Sigmoid colon (tissue), 7 donors: ENCODE measurements at regions of chr13 and their contacts with region 1.

Region 1: GRCh38 chr13:41456768-41457588 is at the start of gene RGCC:
- DNase-seq: peak; percentile 82
- H3K4me3 ChIP-seq: peak within 1 kb of the TSS; percentile 52 to 72 (median 62)
- H3K27ac ChIP-seq: peak within 1 kb of the TSS; percentile 41 to 73 (median 58)
- H3K4me1 ChIP-seq: peaks cover 0 to 24% (median 22%) of the 10 kb centered on the region in 4 donors
- H3K27me3 ChIP-seq: peaks cover 9 to 57% (median 19%) of the 10 kb centered on the region in 3 donors
- CTCF ChIP-seq: no peak
- EP300 ChIP-seq: no peak
- POLR2A ChIP-seq: no peak
- total RNA-seq, gene RGCC: 30.4 to 65.3 (median 43.3) TPM

Region 2: DNA sequence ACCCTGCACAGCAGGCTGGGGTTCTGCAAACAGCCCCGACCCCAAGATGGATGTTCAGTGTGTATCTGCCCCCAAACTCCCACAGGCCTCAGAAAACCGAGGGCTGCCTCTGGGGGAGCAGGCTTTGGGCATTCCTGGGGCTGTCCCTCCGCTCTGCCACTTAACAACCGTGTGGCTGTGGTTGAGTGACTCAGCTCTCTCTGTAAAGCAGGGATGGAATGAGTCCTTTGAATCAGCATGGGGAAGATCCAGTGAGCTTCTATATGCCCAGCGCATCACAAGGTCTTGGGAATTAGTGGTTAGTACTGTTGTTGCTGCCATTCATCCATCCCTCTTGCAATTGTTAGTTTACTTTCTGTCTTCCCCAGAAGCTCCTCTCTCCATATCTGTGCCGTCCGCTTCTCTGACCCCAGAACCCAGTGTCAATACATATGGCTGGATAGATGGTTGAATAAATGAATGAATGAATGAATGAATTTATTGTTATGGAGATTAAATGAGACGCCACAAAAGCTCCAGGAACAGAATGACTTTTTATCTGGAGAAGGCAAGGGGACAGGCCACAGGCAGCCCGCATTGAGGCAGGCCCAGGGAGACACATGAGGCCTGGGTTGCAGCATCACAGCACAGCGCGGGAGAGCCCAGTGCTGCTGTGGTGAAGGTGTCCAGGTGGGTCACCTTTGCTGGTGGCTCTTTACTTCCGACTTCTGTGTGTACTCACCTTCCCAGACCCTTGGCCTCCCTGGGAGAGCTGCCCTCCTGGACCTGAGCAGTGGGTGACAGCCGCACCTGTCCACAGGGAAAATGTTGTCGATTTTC is 89.6 kb after region 1 on chr13:
- intact Hi-C with region 1: loop called (anchors 5 kb)
- DNase-seq: no peak
- H3K4me3 ChIP-seq: no peak overlapping the region
- H3K27ac ChIP-seq: peak overlapping the region; percentile 64 to 74 (median 68)
- H3K4me1 ChIP-seq: peaks cover 0 to 9% (median 8%) of the 10 kb centered on the region in 4 donors
- H3K27me3 ChIP-seq: no peaks in the 10 kb centered on the region
- CTCF ChIP-seq: no peak
- EP300 ChIP-seq: no peak
- POLR2A ChIP-seq: no peak

Region 3: GRCh38 chr13:41577436-41577835 is 120.5 kb after region 1 on chr13:
- intact Hi-C with region 1: no loop called
- DNase-seq: peak; percentile 76
- H3K4me3 ChIP-seq: no peak overlapping the region
- H3K27ac ChIP-seq: no peak overlapping the region
- H3K4me1 ChIP-seq: peaks cover 0 to 2% (median 0%) of the 10 kb centered on the region in 4 donors
- H3K27me3 ChIP-seq: no peaks in the 10 kb centered on the region
- CTCF ChIP-seq: no peak
- EP300 ChIP-seq: no peak
- POLR2A ChIP-seq: no peak

Region 4: DNA sequence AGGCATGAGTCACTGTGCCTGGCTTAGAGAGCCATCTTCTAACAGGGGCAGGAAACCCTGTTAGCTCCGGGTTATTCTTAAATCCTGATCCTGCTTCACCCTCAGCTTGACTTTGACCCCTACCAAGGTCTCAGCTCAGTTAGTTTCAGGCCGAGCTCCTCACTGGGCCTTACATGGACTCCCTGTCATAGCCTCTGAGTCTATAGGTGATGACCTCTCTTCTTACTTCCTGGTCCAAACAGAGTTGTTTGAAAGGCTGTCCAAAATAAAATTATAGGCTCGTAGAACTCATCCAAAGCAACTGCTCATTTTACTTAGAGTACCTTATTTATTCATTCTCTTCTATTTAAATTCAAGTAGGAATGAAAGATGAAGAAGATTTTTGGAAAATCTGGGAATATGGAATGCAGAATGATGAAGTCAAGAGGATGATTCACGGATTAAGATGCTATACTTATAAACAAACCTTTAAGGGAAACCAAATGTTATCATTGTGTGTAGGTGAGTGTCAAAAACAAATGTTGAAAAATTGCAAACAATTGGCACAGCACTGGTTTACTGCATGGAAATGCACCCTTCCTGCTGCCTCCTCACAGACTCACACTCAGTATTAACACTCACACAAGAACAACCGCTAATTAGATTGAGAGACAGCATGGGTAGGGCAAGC is 174.5 kb after region 1 on chr13:
- intact Hi-C with region 1: no loop called
- DNase-seq: no peak
- H3K4me3 ChIP-seq: no peak overlapping the region
- H3K27ac ChIP-seq: peak overlapping the region in 1 of 4 donors; percentile 41
- H3K4me1 ChIP-seq: peaks cover 0 to 13% (median 7%) of the 10 kb centered on the region in 4 donors
- H3K27me3 ChIP-seq: no peaks in the 10 kb centered on the region
- CTCF ChIP-seq: no peak
- EP300 ChIP-seq: no peak
- POLR2A ChIP-seq: no peak

Region 5: GRCh38 chr13:41652727-41653361 is 195.9 kb after region 1 on chr13:
- intact Hi-C with region 1: loop called (anchors 5 kb)
- DNase-seq: no peak
- H3K4me3 ChIP-seq: no peak overlapping the region
- H3K27ac ChIP-seq: peak overlapping the region in 2 of 4 donors; percentile 2 to 6
- H3K4me1 ChIP-seq: peaks cover 0 to 32% (median 19%) of the 10 kb centered on the region in 4 donors
- H3K27me3 ChIP-seq: no peaks in the 10 kb centered on the region
- CTCF ChIP-seq: peak; percentile 32 to 61 (median 48)
- EP300 ChIP-seq: no peak
- POLR2A ChIP-seq: no peak

Region 6: GRCh38 chr13:41891119-41891518 is 434.1 kb after region 1 on chr13:
- intact Hi-C with region 1: no loop called
- DNase-seq: no peak
- H3K4me3 ChIP-seq: no peak overlapping the region
- H3K27ac ChIP-seq: no peak overlapping the region
- H3K4me1 ChIP-seq: no peaks in the 10 kb centered on the region
- H3K27me3 ChIP-seq: no peaks in the 10 kb centered on the region
- CTCF ChIP-seq: no peak
- EP300 ChIP-seq: no peak
- POLR2A ChIP-seq: no peak